ENCODE measurements at regions of chr5 and their contacts with region 1.

Region 1: GRCh38 chr5:140244525-140245025 is 58.3 kb downstream of the PFDN1 start:
- DNase-seq: peak; percentile 94
- ATAC-seq: peak; percentile 45

Region 2: DNA sequence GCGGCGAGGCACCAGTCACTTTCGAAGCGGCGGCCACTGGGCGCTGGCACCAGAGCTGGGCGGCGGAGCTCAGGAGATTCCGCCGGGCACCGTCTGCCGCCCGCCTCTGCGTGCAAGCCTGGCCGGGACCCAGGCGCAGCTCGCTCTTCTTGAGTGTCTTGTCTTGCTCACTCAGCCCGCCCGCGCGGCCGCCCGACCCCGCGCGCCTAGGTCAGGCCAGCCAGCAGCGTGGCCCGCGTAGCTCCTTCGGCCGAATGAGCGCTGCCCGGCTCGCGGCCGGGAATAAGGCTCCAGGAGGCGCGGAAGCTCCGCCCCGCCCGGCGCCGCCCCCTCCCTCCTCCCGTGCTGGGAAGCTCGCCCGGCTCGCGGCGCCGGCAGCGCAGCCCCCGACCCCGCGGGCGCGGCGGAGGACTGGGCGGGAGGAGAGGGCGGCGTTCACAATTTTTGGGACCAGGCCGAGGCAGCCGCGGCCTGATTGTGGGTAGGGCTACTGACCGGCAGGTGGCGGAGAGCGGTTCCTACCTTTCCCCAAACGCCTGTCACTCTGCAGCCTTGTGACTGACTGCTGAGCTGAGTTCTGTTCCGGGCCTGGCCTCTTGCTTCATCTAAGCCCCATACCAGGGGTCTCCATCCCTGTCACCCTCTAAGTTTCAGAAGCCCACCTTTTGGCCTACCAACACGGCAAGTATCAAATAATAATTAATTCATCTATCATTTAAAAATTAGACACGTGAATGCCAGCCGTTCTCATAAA is 102.0 kb after region 1 on chr5 and contains the start of gene HBEGF:
- intact Hi-C with region 1: loop called (anchors 2 kb)
- DNase-seq: peak; percentile 92
- ATAC-seq: peak; percentile 84
- total RNA-seq, gene HBEGF: 21.9 TPM